CD4-positive, alpha-beta memory T cell (primary cell): ENCODE measurements at regions of chr1 and their contacts with region 1.

Region 1: DNA sequence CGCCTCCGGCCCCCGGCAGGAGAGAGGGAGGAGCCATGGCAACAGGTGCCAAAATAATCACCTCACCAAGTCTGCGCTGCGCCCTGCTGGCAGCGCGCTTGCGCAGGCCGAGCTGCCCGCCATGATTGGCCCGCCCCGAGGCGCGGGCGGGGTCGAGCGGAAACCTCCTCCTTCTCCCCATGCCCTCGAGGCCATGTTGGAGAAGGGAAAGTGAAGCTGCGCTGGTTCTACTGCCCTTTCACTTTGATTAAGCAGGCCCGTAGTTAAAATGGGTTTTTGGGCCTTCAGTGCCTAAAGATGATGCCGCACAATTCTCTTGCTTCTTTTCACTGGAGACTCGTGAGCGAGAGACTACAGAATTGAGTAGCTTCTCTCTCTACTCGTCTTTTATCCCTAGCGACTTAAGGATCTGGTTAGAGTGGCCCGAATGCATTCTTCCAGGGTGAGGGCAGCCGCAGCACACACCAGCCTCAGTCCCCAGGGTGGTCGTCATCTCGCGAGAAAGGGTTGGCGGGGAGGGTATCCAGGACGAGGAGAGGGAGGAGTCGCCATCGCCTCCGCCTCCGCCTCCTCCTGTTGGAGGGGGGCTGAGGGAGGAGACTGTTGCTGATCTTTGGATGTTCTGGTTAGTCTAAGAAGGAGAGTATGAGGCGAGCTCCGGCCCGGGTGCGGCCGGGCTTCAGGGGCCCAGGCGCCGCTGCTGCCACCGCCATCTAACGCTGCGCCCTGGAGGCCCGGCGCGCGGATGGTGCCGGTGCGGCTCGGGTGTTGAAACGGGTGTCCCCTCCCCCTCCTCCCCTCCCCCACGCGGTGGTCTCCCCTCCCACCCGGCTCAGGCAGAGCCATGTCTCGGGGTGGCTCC is at the start of gene DCAF6:
- DNase-seq: peak; percentile 98 to 99 (median 99)
- H3K4me3 ChIP-seq: peak within 1 kb of the TSS; percentile 69 to 90
- H3K4me3 Mint-ChIP-seq: peak within 1 kb of the TSS; percentile 90 to 99 (median 94)
- H3K27ac ChIP-seq: peak within 1 kb of the TSS; percentile 85
- H3K27ac Mint-ChIP-seq: peak within 1 kb of the TSS; percentile 97 to 100 (median 98)
- H3K4me1 ChIP-seq: peaks cover 28% of the 10 kb centered on the region
- H3K4me1 Mint-ChIP-seq: peaks cover 29 to 58% (median 43%) of the 10 kb centered on the region in 4 donors
- H3K27me3 ChIP-seq: no peaks in the 10 kb centered on the region
- H3K27me3 Mint-ChIP-seq: no peaks in the 10 kb centered on the region
- total RNA-seq, gene DCAF6: 28.3 to 29.2 TPM

Region 2: GRCh38 chr1:167627865-167628641 is 308.2 kb before region 1 on chr1:
- CTCF ChIA-PET with region 1: no interaction called
- POLR2A ChIA-PET with region 1: interaction called, 9 read pairs
- intact Hi-C with region 1: loop called (anchors 5 kb)
- DNase-seq: peak; percentile 78 to 95 (median 81)
- H3K4me3 ChIP-seq: peak overlapping the region; percentile 74 to 82
- H3K4me3 Mint-ChIP-seq: peak overlapping the region; percentile 90 to 99 (median 94)
- H3K27ac ChIP-seq: peak overlapping the region; percentile 90
- H3K27ac Mint-ChIP-seq: peak overlapping the region; percentile 94 to 99 (median 96)
- H3K4me1 ChIP-seq: peaks cover 56% of the 10 kb centered on the region
- H3K4me1 Mint-ChIP-seq: peaks cover 46 to 81% (median 54%) of the 10 kb centered on the region in 4 donors
- H3K27me3 ChIP-seq: no peaks in the 10 kb centered on the region
- H3K27me3 Mint-ChIP-seq: no peaks in the 10 kb centered on the region

Region 3: DNA sequence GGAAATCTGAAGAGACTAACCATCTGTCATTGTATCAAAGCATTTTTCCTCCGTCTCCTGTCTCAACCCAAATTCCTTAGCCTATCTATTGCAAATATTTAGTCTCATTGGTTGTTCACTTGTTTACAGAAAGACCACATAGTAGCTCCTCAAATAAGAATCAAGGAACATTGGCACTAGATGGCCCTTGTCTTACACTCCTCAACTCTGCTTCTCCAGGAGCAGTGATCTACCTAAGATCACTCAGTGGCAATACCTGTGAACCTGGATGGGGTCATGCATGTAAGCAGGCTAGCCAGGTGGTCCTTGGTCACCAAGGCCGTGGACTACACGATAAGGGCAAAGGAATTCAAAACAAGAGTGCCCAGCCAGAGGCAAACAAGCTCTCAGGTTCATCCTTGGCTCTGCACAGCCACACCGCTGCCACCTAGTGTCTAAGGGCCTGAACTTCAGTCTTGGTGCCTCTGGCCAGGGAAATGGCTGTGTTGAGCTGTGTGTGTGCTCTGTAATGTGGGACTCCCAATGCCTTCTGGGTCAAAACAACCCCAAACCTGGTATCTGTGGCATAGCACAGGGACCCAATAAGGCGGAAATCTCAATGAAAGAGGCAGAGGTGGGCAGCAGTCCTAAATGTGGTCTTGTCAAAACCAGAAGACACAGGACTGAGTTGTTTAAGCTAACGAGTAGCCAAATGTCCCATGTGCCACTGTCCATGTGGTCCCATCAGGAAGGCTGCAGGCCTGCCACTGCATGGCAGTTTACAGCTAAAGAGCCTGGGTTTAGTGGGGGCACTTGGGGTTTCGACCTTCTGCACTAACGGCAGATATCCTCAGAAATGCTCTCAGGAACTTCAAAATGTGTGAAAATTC is 145.9 kb after region 1 on chr1:
- CTCF ChIA-PET with region 1: interaction called, 14 read pairs
- POLR2A ChIA-PET with region 1: interaction called, 6 read pairs
- intact Hi-C with region 1: loop called (anchors 5 kb)
- DNase-seq: peak in 4 of 5 donors; percentile 40 to 55 (median 48)
- H3K4me3 ChIP-seq: no peak overlapping the region
- H3K4me3 Mint-ChIP-seq: no peak overlapping the region
- H3K27ac ChIP-seq: no peak overlapping the region
- H3K27ac Mint-ChIP-seq: peak overlapping the region in 2 of 7 donors; percentile 30
- H3K4me1 ChIP-seq: peaks cover 4% of the 10 kb centered on the region
- H3K4me1 Mint-ChIP-seq: peaks cover 0 to 6% (median 3%) of the 10 kb centered on the region in 4 donors
- H3K27me3 ChIP-seq: no peaks in the 10 kb centered on the region
- H3K27me3 Mint-ChIP-seq: no peaks in the 10 kb centered on the region

Region 4: DNA sequence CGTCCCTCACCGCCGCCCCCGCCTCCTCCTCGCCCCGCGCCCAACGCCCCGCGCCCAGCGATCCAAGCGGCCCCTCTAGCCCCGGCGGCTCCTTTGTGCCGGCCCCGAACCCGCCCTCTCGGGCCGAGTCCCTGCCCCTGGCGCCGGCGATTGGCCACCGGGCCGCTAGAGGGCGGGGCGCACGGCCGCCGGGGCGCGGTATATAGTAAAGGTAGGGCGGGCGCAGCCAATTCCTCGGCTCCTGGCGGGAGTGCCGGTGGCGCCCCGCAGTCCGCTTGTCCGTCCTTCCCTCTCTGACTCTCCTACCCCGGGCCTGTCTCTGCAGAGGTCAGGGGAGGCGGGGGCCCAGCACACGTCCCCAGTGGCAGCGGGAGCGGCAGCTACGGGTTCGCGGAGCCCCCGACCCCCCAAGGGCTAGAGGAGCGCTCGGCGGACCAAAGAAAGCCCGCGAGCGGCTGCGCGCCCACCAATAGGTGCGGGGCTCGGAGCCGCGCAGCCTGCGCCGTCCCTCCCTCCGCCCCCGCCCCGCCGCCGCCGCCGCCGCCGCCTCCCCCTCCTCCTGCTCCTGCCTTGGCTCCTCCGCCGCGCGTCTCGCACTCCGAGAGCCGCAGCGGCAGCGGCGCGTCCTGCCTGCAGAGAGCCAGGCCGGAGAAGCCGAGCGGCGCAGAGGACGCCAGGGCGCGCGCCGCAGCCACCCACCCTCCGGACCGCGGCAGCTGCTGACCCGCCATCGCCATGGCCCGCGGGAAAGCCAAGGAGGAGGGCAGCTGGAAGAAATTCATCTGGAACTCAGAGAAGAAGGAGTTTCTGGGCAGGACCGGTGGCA is 1170.0 kb after region 1 on chr1 and contains the start of gene ATP1B1:
- CTCF ChIA-PET with region 1: no interaction called
- POLR2A ChIA-PET with region 1: no interaction called
- intact Hi-C with region 1: loop called (anchors 5 kb)
- DNase-seq: peak; percentile 72 to 84 (median 78)
- H3K4me3 ChIP-seq: peak within 1 kb of the TSS; percentile 57 to 70
- H3K4me3 Mint-ChIP-seq: peak within 1 kb of the TSS; percentile 78 to 97 (median 90)
- H3K27ac ChIP-seq: peak within 1 kb of the TSS; percentile 23
- H3K27ac Mint-ChIP-seq: peak within 1 kb of the TSS; percentile 58 to 88 (median 78)
- H3K4me1 ChIP-seq: peaks cover 27% of the 10 kb centered on the region
- H3K4me1 Mint-ChIP-seq: peaks cover 20 to 49% (median 34%) of the 10 kb centered on the region in 4 donors
- H3K27me3 ChIP-seq: no peaks in the 10 kb centered on the region
- H3K27me3 Mint-ChIP-seq: peaks cover 2 to 4% of the 10 kb centered on the region in 2 donors
- total RNA-seq, gene ATP1B1: 3.3 to 3.5 TPM

Region 5: DNA sequence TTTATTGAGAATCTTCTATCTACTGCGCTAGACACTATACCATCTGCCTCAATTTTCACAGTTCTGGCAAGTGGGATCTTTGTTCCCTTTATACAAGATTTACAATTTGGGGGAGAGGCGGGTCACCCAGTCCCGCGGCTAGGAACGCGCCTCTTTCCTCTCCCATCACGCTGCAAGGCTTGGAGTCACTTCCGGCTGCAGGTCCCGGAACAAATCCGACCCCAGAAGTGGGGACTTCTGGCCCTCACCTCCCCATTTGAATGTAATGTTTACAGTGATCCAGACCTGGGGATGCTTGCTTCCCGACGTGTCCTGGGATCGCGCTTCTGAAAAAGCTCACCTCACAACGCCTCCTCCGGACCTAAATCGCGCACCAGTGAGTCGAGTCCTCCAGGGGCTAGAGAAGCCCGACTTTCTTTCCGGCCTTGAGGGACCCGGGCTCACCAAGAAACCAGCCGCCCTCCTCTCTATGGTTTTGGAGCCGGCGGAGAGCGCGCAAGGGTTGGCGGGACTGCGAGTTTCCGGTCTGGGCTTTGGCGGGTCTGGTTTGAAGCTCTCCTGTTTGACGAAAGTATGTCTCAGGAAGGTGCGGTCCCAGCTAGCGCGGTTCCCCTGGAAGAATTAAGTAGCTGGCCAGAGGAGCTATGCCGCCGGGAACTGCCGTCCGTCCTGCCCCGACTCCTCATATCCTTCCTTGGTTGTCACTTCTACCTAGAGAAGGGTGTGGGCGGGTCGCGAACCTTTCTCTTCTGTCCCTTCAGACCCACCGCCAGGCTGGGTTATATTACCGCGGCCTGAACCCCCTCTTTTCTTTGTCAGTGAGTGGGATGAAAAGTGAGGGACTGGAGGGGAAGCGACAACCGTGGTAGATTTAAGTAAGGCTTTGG is 1858.5 kb after region 1 on chr1 and contains the start of gene METTL18:
- CTCF ChIA-PET with region 1: no interaction called
- POLR2A ChIA-PET with region 1: no interaction called
- intact Hi-C with region 1: loop called (anchors 2 kb)
- DNase-seq: peak; percentile 92 to 95 (median 93)
- H3K4me3 ChIP-seq: peak within 1 kb of the TSS; percentile 90 to 93
- H3K4me3 Mint-ChIP-seq: peak within 1 kb of the TSS; percentile 96 to 100 (median 98)
- H3K27ac ChIP-seq: peak within 1 kb of the TSS; percentile 93
- H3K27ac Mint-ChIP-seq: peak within 1 kb of the TSS; percentile 90 to 100 (median 99)
- H3K4me1 ChIP-seq: peaks cover 30% of the 10 kb centered on the region
- H3K4me1 Mint-ChIP-seq: peaks cover 36 to 56% (median 48%) of the 10 kb centered on the region in 4 donors
- H3K27me3 ChIP-seq: no peaks in the 10 kb centered on the region
- H3K27me3 Mint-ChIP-seq: no peaks in the 10 kb centered on the region
- total RNA-seq, gene METTL18: 21.0 to 23.8 TPM